Activated CD8-positive, alpha-beta T cell treated with anti-CD3 and anti-CD28 coated beads for 36 hours (primary cell): ENCODE measurements at regions of chr5 and their contacts with region 1.

Region 1: GRCh38 chr5:58200451-58200850 is 259.4 kb downstream of the PLK2 start:
- DNase-seq: no peak
- ATAC-seq: no peak
- H3K4me3 Mint-ChIP-seq: no peak overlapping the region
- H3K27ac Mint-ChIP-seq: no peak overlapping the region
- H3K4me1 Mint-ChIP-seq: no peaks in the 10 kb centered on the region
- H3K27me3 Mint-ChIP-seq: peaks cover 2% of the 10 kb centered on the region
- CTCF ChIP-seq: no peak

Region 2: GRCh38 chr5:58188262-58188651 is 12.2 kb before region 1 on chr5:
- CTCF ChIA-PET with region 1: no interaction called
- POLR2A ChIA-PET with region 1: no interaction called
- intact Hi-C with region 1: loop called (anchors 1 kb)
- DNase-seq: no peak
- ATAC-seq: no peak
- H3K4me3 Mint-ChIP-seq: no peak overlapping the region
- H3K27ac Mint-ChIP-seq: no peak overlapping the region
- H3K4me1 Mint-ChIP-seq: no peaks in the 10 kb centered on the region
- H3K27me3 Mint-ChIP-seq: peaks cover 4% of the 10 kb centered on the region
- CTCF ChIP-seq: no peak

Region 3: GRCh38 chr5:58273711-58274110 is 73.3 kb after region 1 on chr5:
- CTCF ChIA-PET with region 1: no interaction called
- POLR2A ChIA-PET with region 1: no interaction called
- intact Hi-C with region 1: no loop called
- DNase-seq: no peak
- ATAC-seq: no peak
- H3K4me3 Mint-ChIP-seq: no peak overlapping the region
- H3K27ac Mint-ChIP-seq: no peak overlapping the region
- H3K4me1 Mint-ChIP-seq: no peaks in the 10 kb centered on the region
- H3K27me3 Mint-ChIP-seq: peaks cover 11% of the 10 kb centered on the region
- CTCF ChIP-seq: no peak